H1 (cell line): ENCODE measurements at regions of chr11 and their contacts with region 1.

Region 1: DNA sequence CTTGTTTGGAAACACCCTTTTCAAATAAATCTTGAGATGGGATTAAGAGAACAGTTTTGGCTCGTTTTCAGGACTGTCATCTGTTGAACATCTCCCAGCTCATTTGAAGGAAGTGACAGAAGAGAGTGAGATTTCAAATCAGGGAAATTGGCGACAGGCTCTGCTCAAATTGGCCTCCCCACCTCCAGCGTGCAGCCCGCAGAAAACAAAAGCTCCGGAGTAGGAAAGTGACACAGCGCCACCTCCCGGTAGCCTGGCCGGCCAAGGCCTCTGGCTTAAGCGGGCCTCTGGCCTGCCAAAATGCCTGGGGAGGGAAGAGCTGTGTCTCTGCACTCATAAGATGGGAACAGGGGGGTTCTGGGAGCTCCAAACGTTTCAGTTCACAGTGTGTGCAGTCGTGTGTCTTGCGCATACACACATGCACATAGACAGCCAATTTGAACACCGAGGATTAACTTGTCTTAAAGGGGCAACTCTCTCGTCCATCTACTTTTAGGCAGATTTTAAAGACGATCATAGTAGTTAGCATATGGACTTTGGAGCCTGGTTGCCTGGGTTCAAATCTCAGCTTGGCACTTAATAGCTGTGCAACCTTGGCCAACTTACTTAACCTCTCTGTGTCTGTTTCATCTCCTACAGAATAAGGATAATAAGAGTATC is 132.7 kb upstream of the RCN1 start:
- DNase-seq: peak; percentile 47 to 97
- H3K4me3 ChIP-seq: no peak overlapping the region
- H3K27ac ChIP-seq: no peak overlapping the region
- H3K4me1 ChIP-seq: peaks cover 0 to 5% (median 0%) of the 10 kb centered on the region in 4 experiments; a peak in 1 of 7 replicates
- H3K27me3 ChIP-seq: no peaks in the 10 kb centered on the region; a peak in 1 of 7 replicates
- CTCF ChIP-seq: peak; percentile 90 to 95 (median 94)
- EP300 ChIP-seq: no peak
- POLR2A ChIP-seq: no peak
- RAD21 ChIP-seq: peak; percentile 93 to 94

Region 2: GRCh38 chr11:31641477-31642062 is 316.6 kb before region 1 on chr11:
- CTCF ChIA-PET with region 1: interaction called, 14 read pairs
- POLR2A ChIA-PET with region 1: no interaction called
- DNase-seq: peak; percentile 17 to 59
- H3K4me3 ChIP-seq: no peak overlapping the region
- H3K27ac ChIP-seq: no peak overlapping the region
- H3K4me1 ChIP-seq: no peaks in the 10 kb centered on the region
- H3K27me3 ChIP-seq: no peaks in the 10 kb centered on the region
- CTCF ChIP-seq: peak; percentile 54 to 72 (median 70)
- EP300 ChIP-seq: no peak
- POLR2A ChIP-seq: no peak
- RAD21 ChIP-seq: peak; percentile 79

Region 3: DNA sequence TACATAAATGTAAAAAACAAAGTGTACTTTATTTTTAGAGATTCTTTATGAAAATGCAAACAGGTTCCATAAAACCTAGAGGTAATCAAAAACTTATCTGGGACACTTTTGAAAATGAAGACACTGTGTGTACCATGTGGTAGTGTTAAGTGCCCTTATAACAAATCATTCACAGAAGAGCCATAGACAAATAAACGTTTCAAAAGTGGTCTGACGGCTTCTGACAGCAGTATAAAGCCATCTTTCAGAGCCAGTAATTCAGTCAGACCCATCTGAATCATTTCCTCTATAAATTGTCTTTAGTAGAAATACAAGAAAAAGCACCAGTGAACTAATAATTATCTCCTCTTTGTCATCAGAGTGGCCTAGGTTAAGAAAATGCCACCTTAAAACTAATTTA is 247.1 kb before region 1 on chr11:
- CTCF ChIA-PET with region 1: no interaction called
- POLR2A ChIA-PET with region 1: no interaction called
- DNase-seq: no peak
- H3K4me3 ChIP-seq: no peak overlapping the region
- H3K27ac ChIP-seq: no peak overlapping the region
- H3K4me1 ChIP-seq: peaks cover 0 to 5% (median 2%) of the 10 kb centered on the region in 4 experiments; a peak in 2 of 7 replicates
- H3K27me3 ChIP-seq: no peaks in the 10 kb centered on the region
- CTCF ChIP-seq: no peak
- EP300 ChIP-seq: no peak
- POLR2A ChIP-seq: no peak
- RAD21 ChIP-seq: no peak

Region 4: GRCh38 chr11:31810779-31811647 is 147.2 kb before region 1 on chr11 and contains the start of gene PAX6:
- CTCF ChIA-PET with region 1: interaction called, 14 read pairs
- POLR2A ChIA-PET with region 1: no interaction called
- DNase-seq: peak in 1 of 2 experiments; percentile 87
- H3K4me3 ChIP-seq: peak within 1 kb of the TSS; percentile 36 to 62 (median 50)
- H3K27ac ChIP-seq: no peak within 1 kb of the TSS
- H3K4me1 ChIP-seq: peaks cover 22 to 51% (median 41%) of the 10 kb centered on the region in 4 experiments
- H3K27me3 ChIP-seq: peaks cover 87 to 99% (median 96%) of the 10 kb centered on the region in 4 experiments
- CTCF ChIP-seq: no peak
- EP300 ChIP-seq: no peak
- POLR2A ChIP-seq: no peak
- RAD21 ChIP-seq: no peak
- total RNA-seq, gene PAX6: 0.21 and 0.30 TPM in 2 replicates

Region 5: DNA sequence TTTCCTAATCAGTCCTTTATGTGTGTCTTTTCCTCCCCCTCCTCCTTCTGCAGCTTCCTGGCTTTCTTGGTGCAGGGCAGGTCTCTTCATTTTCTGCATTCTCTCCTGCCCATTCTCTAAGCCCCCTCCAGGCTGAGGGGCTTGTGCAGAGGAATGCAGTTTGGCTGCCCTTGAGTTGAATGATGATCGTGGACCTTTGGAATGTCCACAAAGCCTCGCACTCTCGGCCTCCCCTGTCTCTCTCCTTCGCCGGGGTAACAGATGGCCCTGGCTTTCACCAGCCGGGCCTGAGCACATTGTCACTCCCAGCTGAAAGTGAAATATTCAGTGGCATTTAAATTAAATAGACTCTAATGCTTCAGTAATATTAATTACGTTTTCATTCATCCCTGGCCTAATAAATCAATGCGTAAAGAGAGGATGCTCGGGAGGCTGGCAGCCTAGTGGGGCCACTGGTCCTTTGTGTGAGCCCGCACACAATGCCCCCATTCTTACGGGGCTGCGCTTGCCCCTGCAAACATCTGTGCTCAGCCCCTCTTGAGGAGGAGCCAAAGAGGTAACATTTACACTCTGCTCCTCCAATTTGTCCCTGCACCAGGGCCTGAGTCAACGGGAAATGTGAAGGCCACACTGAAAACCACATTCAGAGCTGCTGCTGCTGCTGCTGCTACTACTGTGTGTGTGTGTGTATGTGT is 82.2 kb before region 1 on chr11:
- CTCF ChIA-PET with region 1: interaction called, 21 read pairs
- POLR2A ChIA-PET with region 1: no interaction called
- DNase-seq: no peak
- H3K4me3 ChIP-seq: no peak overlapping the region
- H3K27ac ChIP-seq: no peak overlapping the region
- H3K4me1 ChIP-seq: peaks cover 6 to 18% (median 15%) of the 10 kb centered on the region in 4 experiments; a peak in 6 of 7 replicates
- H3K27me3 ChIP-seq: peaks cover 0 to 11% (median 2%) of the 10 kb centered on the region in 4 experiments; a peak in 3 of 7 replicates
- CTCF ChIP-seq: no peak
- EP300 ChIP-seq: no peak
- POLR2A ChIP-seq: no peak
- RAD21 ChIP-seq: no peak

Region 6: GRCh38 chr11:31932879-31933278 is 25.3 kb before region 1 on chr11:
- CTCF ChIA-PET with region 1: interaction called, 22 read pairs
- POLR2A ChIA-PET with region 1: no interaction called
- DNase-seq: no peak
- H3K4me3 ChIP-seq: no peak overlapping the region
- H3K27ac ChIP-seq: no peak overlapping the region
- H3K4me1 ChIP-seq: peaks cover 0 to 2% (median 0%) of the 10 kb centered on the region in 4 experiments; a peak in 1 of 7 replicates
- H3K27me3 ChIP-seq: no peaks in the 10 kb centered on the region
- CTCF ChIP-seq: no peak
- EP300 ChIP-seq: no peak
- POLR2A ChIP-seq: no peak
- RAD21 ChIP-seq: no peak

Region 7: GRCh38 chr11:31981457-31981856 is 23.3 kb after region 1 on chr11:
- CTCF ChIA-PET with region 1: interaction called, 39 read pairs
- POLR2A ChIA-PET with region 1: no interaction called
- DNase-seq: no peak
- H3K4me3 ChIP-seq: no peak overlapping the region
- H3K27ac ChIP-seq: no peak overlapping the region
- H3K4me1 ChIP-seq: no peaks in the 10 kb centered on the region
- H3K27me3 ChIP-seq: peaks cover 0 to 1% (median 0%) of the 10 kb centered on the region in 4 experiments; a peak in 1 of 7 replicates
- CTCF ChIP-seq: no peak
- EP300 ChIP-seq: no peak
- POLR2A ChIP-seq: no peak
- RAD21 ChIP-seq: no peak

Region 8: DNA sequence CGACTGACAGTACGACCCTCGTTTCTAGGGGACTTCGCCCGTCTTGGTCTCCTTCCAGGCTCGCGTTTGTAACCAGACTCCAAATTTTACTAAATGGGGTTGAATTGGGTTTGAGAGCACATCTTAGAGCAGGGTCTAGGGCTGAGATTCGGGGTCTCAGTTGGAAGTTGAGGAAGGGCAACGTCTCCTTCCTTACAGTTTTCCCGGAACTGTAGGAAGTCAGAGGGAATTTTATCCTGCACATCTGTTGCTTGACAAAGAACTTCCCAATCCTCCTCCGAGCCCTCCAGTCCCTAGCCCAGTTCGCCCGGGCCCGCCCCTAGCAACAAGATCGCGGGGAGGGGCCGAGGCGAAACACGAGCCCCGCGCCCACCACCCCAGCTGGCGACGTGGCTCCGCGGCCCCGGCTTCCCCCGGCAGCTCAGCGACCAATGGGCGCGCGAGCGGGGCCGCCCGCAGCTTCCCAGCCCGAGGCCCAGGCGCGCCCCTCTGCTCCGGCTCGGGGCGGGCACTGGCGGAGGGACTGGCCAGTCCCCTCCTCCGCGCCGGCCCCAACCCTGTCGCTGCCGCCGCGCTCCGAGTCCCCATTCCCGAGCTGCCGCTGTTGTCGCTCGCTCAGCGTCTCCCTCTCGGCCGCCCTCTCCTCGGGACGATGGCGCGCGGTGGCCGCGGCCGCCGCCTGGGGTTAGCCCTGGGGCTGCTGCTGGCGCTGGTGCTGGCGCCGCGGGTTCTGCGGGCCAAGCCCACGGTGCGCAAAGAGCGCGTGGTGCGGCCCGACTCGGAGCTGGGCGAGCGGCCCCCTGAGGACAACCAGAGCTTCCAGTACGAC is 132.6 kb after region 1 on chr11 and contains the start of gene RCN1:
- CTCF ChIA-PET with region 1: no interaction called
- POLR2A ChIA-PET with region 1: no interaction called
- DNase-seq: peak; percentile 47 to 85
- H3K4me3 ChIP-seq: peak within 1 kb of the TSS; percentile 58 to 86 (median 67)
- H3K27ac ChIP-seq: peak within 1 kb of the TSS; percentile 60; the same call in 1 of the 2 replicates
- H3K4me1 ChIP-seq: peaks cover 0 to 13% (median 3%) of the 10 kb centered on the region in 4 experiments; a peak in 4 of 7 replicates
- H3K27me3 ChIP-seq: no peaks in the 10 kb centered on the region; a peak in 2 of 7 replicates
- CTCF ChIP-seq: no peak
- EP300 ChIP-seq: no peak; a peak in 1 of 3 replicates
- POLR2A ChIP-seq: peak; percentile 70 to 74
- RAD21 ChIP-seq: no peak
- total RNA-seq, gene RCN1: 119 and 123 TPM in 2 replicates

Region 9: GRCh38 chr11:32188785-32189184 is 230.6 kb after region 1 on chr11:
- CTCF ChIA-PET with region 1: no interaction called
- POLR2A ChIA-PET with region 1: no interaction called
- DNase-seq: no peak
- H3K4me3 ChIP-seq: no peak overlapping the region
- H3K27ac ChIP-seq: no peak overlapping the region
- H3K4me1 ChIP-seq: no peaks in the 10 kb centered on the region
- H3K27me3 ChIP-seq: no peaks in the 10 kb centered on the region
- CTCF ChIP-seq: peak in 2 of 3 experiments; percentile 29 to 59; a peak in 3 of 4 replicates
- EP300 ChIP-seq: no peak
- POLR2A ChIP-seq: no peak
- RAD21 ChIP-seq: peak; percentile 13 to 39; a peak in 3 of 4 replicates